GM12878 (cell line): ENCODE measurements at regions of chr2 and their contacts with region 1.

Region 1: DNA sequence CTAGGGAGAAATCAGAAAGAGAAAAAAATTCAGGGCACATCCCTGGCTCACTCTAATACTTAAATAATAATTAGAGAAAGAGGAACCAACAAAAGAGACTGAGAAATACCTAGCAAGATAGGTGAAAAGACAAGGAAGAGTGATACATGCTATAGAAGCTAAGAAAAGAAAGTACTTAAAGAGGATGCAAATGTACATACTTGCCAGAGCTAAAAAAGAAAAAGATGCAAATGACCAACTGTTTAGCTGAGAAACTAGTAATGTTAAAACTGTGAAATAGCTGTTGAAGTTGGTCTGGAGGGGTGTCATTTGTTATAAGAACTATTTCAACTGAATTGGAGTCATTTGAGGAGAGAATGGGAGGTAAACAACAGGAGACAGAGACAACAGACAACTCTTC is 412.2 kb downstream of the SPAG16 start:
- DNase-seq: no peak
- ATAC-seq: no peak; the same call in 2 of the 3 replicates
- H3K4me3 ChIP-seq: no peak overlapping the region
- H3K27ac ChIP-seq: no peak overlapping the region
- H3K4me1 ChIP-seq: no peaks in the 10 kb centered on the region
- H3K27me3 ChIP-seq: no peaks in the 10 kb centered on the region
- CTCF ChIP-seq: no peak
- EP300 ChIP-seq: no peak
- POLR2A ChIP-seq: no peak
- RAD21 ChIP-seq: no peak

Region 2: DNA sequence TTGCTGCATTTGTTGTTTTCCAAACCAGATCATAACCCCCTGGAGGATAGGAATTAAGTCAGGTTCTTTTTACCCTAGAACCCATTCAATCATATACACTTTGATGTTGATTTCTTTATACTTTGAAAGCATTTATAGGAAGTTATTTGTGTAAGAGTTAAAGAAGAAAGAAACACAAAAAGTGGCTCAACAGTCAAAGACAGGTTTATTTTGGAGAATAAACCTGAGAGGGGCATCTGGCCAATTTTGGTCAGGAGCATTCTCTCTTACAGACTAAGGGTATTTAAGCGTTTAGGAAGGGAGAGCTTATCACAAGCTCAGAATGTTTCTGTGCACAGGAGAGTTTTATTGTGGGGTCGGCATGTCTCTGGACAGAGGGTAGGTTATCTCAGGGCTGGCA is 14.2 kb before region 1 on chr2:
- CTCF ChIA-PET with region 1: interaction called, 3 read pairs
- POLR2A ChIA-PET with region 1: no interaction called
- RAD21 ChIA-PET with region 1: no interaction called
- SMC1A ChIA-PET with region 1: interaction called, 12 read pairs
- in situ Hi-C with region 1: no loop called
- intact Hi-C with region 1: no loop called
- DNase-seq: no peak
- ATAC-seq: no peak
- H3K4me3 ChIP-seq: no peak overlapping the region
- H3K27ac ChIP-seq: no peak overlapping the region
- H3K4me1 ChIP-seq: no peaks in the 10 kb centered on the region
- H3K27me3 ChIP-seq: no peaks in the 10 kb centered on the region
- CTCF ChIP-seq: no peak
- EP300 ChIP-seq: no peak
- POLR2A ChIP-seq: no peak
- RAD21 ChIP-seq: no peak